CD14-positive monocyte (primary cell): ENCODE measurements at regions of chr19 and their contacts with region 1.

Region 1: GRCh38 chr19:29714953-29715700 is at the start of gene C19orf12:
- DNase-seq: peak in 1 of 3 donors; percentile 32
- H3K4me3 ChIP-seq: peak within 1 kb of the TSS; percentile 81 to 95 (median 87)
- H3K4me3 Mint-ChIP-seq: peak within 1 kb of the TSS; percentile 82 to 93
- H3K27ac ChIP-seq: peak within 1 kb of the TSS; percentile 65 to 93
- H3K27ac Mint-ChIP-seq: peak within 1 kb of the TSS; percentile 82 to 93 (median 91)
- H3K4me1 ChIP-seq: peaks cover 16 to 22% of the 10 kb centered on the region in 2 donors
- H3K4me1 Mint-ChIP-seq: peaks cover 37% of the 10 kb centered on the region
- H3K27me3 ChIP-seq: no peaks in the 10 kb centered on the region
- H3K27me3 Mint-ChIP-seq: peaks cover 0 to 3% (median 2%) of the 10 kb centered on the region in 3 donors
- CTCF ChIP-seq: no peak
- polyA plus RNA-seq, gene C19orf12: 6.0 to 8.0 (median 6.8) TPM

Region 2: GRCh38 chr19:29694669-29695627 is 20.2 kb before region 1 on chr19:
- intact Hi-C with region 1: loop called in 1 of 2 experiments (anchors 1 kb)
- DNase-seq: peak; percentile 67 to 74 (median 73)
- H3K4me3 ChIP-seq: no peak overlapping the region
- H3K4me3 Mint-ChIP-seq: no peak overlapping the region
- H3K27ac ChIP-seq: no peak overlapping the region
- H3K27ac Mint-ChIP-seq: peak overlapping the region in 2 of 7 donors; percentile 50 to 63
- H3K4me1 ChIP-seq: peaks cover 0 to 3% of the 10 kb centered on the region in 2 donors
- H3K4me1 Mint-ChIP-seq: peaks cover 6% of the 10 kb centered on the region
- H3K27me3 ChIP-seq: no peaks in the 10 kb centered on the region
- H3K27me3 Mint-ChIP-seq: peaks cover 0 to 1% (median 0%) of the 10 kb centered on the region in 3 donors
- CTCF ChIP-seq: peak; percentile 91

Region 3: DNA sequence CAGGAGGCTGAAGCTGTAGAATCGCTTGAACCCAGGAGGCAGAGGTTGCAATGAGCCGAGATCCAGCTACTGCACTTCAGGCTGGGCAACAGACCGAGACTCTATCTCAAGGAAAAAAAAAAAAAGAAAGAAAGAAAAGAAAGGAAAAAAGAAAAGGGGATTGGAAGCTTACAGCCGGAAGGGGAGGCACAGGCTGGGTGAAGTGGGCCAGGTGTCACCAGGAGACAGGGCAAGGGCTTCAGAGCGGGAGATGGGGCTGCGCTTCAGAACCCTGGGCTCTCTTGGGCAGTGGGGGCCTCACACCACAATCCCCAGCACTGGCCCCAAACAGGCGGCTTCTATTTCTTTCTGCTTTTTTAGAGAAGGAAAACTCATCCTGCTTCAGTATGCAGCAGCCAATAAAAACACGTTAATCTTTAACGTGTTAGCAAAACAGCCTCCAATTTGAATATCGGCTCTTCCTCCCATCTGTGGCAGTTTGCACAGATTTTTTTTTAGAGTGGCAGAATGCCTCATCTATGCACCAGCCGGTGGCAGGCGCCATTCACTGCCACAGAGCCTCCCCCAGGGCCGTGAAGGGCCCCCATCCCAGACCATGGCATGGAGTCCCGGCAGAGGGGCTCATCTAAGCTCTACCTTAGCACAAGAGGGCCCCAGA is 46.6 kb after region 1 on chr19:
- intact Hi-C with region 1: no loop called
- DNase-seq: no peak
- H3K4me3 ChIP-seq: no peak overlapping the region
- H3K4me3 Mint-ChIP-seq: no peak overlapping the region
- H3K27ac ChIP-seq: no peak overlapping the region
- H3K27ac Mint-ChIP-seq: no peak overlapping the region
- H3K4me1 ChIP-seq: peaks cover 0 to 6% of the 10 kb centered on the region in 2 donors
- H3K4me1 Mint-ChIP-seq: peaks cover 8% of the 10 kb centered on the region
- H3K27me3 ChIP-seq: peaks cover 0 to 3% of the 10 kb centered on the region in 2 donors
- H3K27me3 Mint-ChIP-seq: peaks cover 4 to 9% (median 7%) of the 10 kb centered on the region in 3 donors
- CTCF ChIP-seq: no peak